Activated CD4-positive, alpha-beta T cell treated with anti-CD3 and anti-CD28 coated beads for 36 hours (primary cell): ENCODE measurements at regions of chr11 and their contacts with region 1.

Region 1: DNA sequence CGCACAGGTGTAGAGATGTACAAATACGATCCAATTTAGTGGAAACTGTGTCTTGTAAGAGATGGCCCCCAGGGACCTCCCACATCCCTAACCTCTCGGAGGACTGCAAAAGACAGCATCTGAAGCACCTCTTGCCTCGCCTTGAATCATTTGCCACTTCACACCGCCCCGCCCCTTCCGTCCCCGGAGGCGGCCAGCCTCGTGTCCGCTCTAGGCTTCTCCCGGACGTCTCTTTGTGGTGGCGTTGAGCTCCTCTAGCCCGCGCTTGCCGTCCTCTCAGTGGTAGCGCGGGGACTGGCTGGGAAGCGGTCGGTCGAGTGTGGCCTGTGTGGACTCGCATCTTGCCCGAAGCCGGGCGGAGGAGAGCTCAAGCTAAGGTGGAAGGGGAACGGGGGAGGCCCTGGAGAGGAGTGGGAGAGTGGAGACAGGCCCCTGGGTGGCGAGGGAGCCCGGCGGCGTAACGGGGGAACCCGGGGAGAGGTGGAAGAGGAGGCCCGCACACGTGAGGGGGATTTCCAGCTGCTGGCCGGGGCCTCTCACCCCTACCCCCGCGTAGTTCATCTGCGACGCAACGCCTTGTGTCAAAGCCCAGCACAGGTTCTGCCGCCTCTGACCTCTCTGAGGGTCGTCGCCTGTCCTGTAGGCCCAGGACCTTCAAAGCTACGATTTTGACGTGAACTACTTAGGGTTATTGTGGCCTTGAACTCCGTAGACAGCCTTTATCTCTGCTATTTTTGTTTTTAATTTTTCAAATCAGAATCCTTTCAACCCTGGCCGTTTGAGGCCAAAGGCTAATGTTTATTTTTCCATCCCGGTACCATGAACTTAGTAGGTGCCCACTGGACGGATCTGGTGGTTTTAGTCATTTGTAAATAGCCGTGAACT is at the start of gene ARL14EP:
- DNase-seq: peak; percentile 94
- ATAC-seq: peak; percentile 92
- H3K4me3 Mint-ChIP-seq: peak within 1 kb of the TSS; percentile 94
- H3K27ac Mint-ChIP-seq: peak within 1 kb of the TSS; percentile 100
- H3K4me1 Mint-ChIP-seq: peaks cover 38% of the 10 kb centered on the region
- H3K27me3 Mint-ChIP-seq: peaks cover 6% of the 10 kb centered on the region
- total RNA-seq, gene ARL14EP: 34.8 to 51.8 TPM

Region 2: GRCh38 chr11:29361369-29361768 is 961.7 kb before region 1 on chr11:
- CTCF ChIA-PET with region 1: no interaction called
- POLR2A ChIA-PET with region 1: no interaction called
- intact Hi-C with region 1: no loop called
- DNase-seq: no peak
- ATAC-seq: no peak
- H3K4me3 Mint-ChIP-seq: no peak overlapping the region
- H3K27ac Mint-ChIP-seq: no peak overlapping the region
- H3K4me1 Mint-ChIP-seq: no peaks in the 10 kb centered on the region
- H3K27me3 Mint-ChIP-seq: no peaks in the 10 kb centered on the region

Region 3: DNA sequence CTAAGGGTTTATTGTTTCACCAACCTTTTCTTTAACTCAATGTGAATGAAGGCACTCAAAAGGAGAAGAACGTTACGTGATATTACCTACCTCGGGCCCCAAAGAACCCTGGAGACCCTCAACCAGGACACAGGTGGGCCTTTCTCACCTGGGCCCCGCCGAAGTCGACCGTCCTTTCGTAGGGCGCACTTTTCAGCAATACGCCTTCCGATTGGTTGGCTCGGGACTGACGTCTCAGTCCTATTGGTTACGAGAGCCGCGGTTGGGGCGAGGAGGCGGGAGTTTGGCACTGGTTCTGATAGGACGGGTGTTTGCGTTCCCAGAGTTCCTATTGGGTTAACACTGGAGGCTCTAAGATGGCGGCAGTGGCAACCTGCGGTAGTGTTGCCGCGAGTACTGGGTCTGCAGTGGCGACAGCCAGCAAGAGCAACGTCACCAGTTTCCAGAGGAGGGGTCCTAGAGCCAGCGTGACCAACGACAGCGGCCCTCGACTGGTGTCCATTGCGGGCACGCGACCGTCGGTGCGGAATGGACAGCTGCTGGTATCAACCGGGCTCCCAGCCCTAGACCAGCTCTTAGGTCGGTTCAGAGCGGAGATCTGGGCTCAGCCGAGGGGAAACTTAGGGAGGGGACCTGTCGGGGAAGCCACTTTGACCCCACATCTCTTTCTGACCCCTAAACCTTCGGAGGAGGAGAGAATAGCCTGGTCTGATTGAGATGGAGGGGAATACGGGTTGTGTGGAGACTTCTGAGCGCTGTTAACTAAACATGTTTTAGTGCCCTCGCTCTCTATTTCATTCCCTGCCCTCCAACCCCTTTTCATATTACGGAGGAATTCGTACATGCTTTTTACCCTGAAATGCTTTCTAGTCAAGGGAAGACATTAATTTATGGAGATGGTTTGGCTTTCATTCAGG is 1186.6 kb after region 1 on chr11 and contains the starts of genes ELP4 and IMMP1L:
- CTCF ChIA-PET with region 1: no interaction called
- POLR2A ChIA-PET with region 1: no interaction called
- intact Hi-C with region 1: loop called in 1 of 2 experiments (anchors 5 kb)
- DNase-seq: peak; percentile 97
- ATAC-seq: peak; percentile 100
- H3K4me3 Mint-ChIP-seq: peak within 1 kb of the TSS; percentile 98
- H3K27ac Mint-ChIP-seq: peak within 1 kb of the TSS; percentile 88
- H3K4me1 Mint-ChIP-seq: peaks cover 36% of the 10 kb centered on the region
- H3K27me3 Mint-ChIP-seq: no peaks in the 10 kb centered on the region
- total RNA-seq, gene ELP4: 21.9 to 30.9 TPM
- total RNA-seq, gene IMMP1L: 18.8 to 21.0 TPM

Region 4: DNA sequence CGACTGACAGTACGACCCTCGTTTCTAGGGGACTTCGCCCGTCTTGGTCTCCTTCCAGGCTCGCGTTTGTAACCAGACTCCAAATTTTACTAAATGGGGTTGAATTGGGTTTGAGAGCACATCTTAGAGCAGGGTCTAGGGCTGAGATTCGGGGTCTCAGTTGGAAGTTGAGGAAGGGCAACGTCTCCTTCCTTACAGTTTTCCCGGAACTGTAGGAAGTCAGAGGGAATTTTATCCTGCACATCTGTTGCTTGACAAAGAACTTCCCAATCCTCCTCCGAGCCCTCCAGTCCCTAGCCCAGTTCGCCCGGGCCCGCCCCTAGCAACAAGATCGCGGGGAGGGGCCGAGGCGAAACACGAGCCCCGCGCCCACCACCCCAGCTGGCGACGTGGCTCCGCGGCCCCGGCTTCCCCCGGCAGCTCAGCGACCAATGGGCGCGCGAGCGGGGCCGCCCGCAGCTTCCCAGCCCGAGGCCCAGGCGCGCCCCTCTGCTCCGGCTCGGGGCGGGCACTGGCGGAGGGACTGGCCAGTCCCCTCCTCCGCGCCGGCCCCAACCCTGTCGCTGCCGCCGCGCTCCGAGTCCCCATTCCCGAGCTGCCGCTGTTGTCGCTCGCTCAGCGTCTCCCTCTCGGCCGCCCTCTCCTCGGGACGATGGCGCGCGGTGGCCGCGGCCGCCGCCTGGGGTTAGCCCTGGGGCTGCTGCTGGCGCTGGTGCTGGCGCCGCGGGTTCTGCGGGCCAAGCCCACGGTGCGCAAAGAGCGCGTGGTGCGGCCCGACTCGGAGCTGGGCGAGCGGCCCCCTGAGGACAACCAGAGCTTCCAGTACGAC is 1767.7 kb after region 1 on chr11 and contains the start of gene RCN1:
- CTCF ChIA-PET with region 1: no interaction called
- POLR2A ChIA-PET with region 1: no interaction called
- intact Hi-C with region 1: loop called in 1 of 2 experiments (anchors 10 kb)
- DNase-seq: peak; percentile 62
- ATAC-seq: peak; percentile 59
- H3K4me3 Mint-ChIP-seq: peak within 1 kb of the TSS; percentile 79
- H3K27ac Mint-ChIP-seq: peak within 1 kb of the TSS; percentile 85
- H3K4me1 Mint-ChIP-seq: peaks cover 43% of the 10 kb centered on the region
- H3K27me3 Mint-ChIP-seq: peaks cover 10% of the 10 kb centered on the region
- total RNA-seq, gene RCN1: 19.1 to 24.1 TPM